ENCODE measurements at regions of chr4 and their contacts with region 1.

Region 1: GRCh38 chr4:142095886-142096605 is 459.7 kb downstream of the IL15 start:
- DNase-seq: peak; percentile 94
- H3K4me3 ChIP-seq: no peak overlapping the region
- H3K27ac ChIP-seq: peak overlapping the region; percentile 68
- H3K4me1 ChIP-seq: peaks cover 28% of the 10 kb centered on the region
- H3K27me3 ChIP-seq: no peaks in the 10 kb centered on the region
- CTCF ChIP-seq: no peak
- POLR2A ChIP-seq: no peak

Region 2: GRCh38 chr4:141220655-141221605 is 875.1 kb before region 1 on chr4 and contains the start of gene ZNF330:
- CTCF ChIA-PET with region 1: no interaction called
- POLR2A ChIA-PET with region 1: no interaction called
- dilution Hi-C with region 1: no loop called
- intact Hi-C with region 1: loop called (anchors 5 kb)
- DNase-seq: peak; percentile 93
- H3K4me3 ChIP-seq: peak within 1 kb of the TSS; percentile 92 to 99 (median 97)
- H3K27ac ChIP-seq: peak within 1 kb of the TSS; percentile 71
- H3K4me1 ChIP-seq: peaks cover 10% of the 10 kb centered on the region
- H3K27me3 ChIP-seq: peaks cover 0 to under 1% of the 10 kb centered on the region in 2 experiments
- CTCF ChIP-seq: peak; percentile 4 to 16
- POLR2A ChIP-seq: peak; percentile 69
- total RNA-seq, gene ZNF330: 31.0 and 34.2 TPM in 2 replicates

Region 3: GRCh38 chr4:141425124-141425523 is 670.9 kb before region 1 on chr4:
- CTCF ChIA-PET with region 1: no interaction called
- POLR2A ChIA-PET with region 1: no interaction called
- dilution Hi-C with region 1: no loop called
- intact Hi-C with region 1: no loop called
- DNase-seq: no peak
- H3K4me3 ChIP-seq: no peak overlapping the region
- H3K27ac ChIP-seq: no peak overlapping the region
- H3K4me1 ChIP-seq: no peaks in the 10 kb centered on the region
- H3K27me3 ChIP-seq: no peaks in the 10 kb centered on the region
- CTCF ChIP-seq: no peak
- POLR2A ChIP-seq: no peak

Region 4: GRCh38 chr4:141686146-141686775 is 409.8 kb before region 1 on chr4:
- CTCF ChIA-PET with region 1: no interaction called
- POLR2A ChIA-PET with region 1: no interaction called
- dilution Hi-C with region 1: no loop called
- intact Hi-C with region 1: loop called (anchors 1 kb)
- DNase-seq: peak; percentile 70
- H3K4me3 ChIP-seq: no peak overlapping the region
- H3K27ac ChIP-seq: peak overlapping the region; percentile 57
- H3K4me1 ChIP-seq: peaks cover 23% of the 10 kb centered on the region
- H3K27me3 ChIP-seq: no peaks in the 10 kb centered on the region
- CTCF ChIP-seq: no peak
- POLR2A ChIP-seq: no peak

Region 5: GRCh38 chr4:141826260-141826659 is 269.8 kb before region 1 on chr4:
- CTCF ChIA-PET with region 1: no interaction called
- POLR2A ChIA-PET with region 1: no interaction called
- dilution Hi-C with region 1: no loop called
- intact Hi-C with region 1: loop called (anchors 1 kb)
- DNase-seq: peak; percentile 45
- H3K4me3 ChIP-seq: no peak overlapping the region
- H3K27ac ChIP-seq: peak overlapping the region; percentile 68
- H3K4me1 ChIP-seq: peaks cover 19% of the 10 kb centered on the region
- H3K27me3 ChIP-seq: no peaks in the 10 kb centered on the region
- CTCF ChIP-seq: no peak
- POLR2A ChIP-seq: no peak

Region 6: DNA sequence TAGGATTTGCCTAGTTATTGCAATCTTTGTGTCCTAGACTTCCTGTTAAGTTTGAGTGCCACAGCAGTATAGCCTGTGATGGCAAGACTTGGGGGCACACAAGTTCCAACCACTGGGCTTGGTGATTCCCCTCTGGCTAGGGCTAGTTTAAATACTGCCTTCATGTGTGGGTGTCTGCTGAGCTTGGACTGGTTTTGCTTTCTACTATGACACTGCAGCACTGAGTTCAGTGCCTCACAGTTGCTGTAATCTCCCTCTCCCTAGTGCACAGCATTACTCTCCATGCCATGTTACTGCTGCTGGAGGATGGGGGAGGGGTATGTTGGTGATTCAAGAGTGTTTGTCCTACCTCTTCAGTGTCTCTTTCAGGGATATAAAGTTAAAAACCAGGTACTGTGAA is 80.0 kb before region 1 on chr4:
- CTCF ChIA-PET with region 1: no interaction called
- POLR2A ChIA-PET with region 1: no interaction called
- dilution Hi-C with region 1: no loop called
- intact Hi-C with region 1: no loop called
- DNase-seq: no peak
- H3K4me3 ChIP-seq: no peak overlapping the region
- H3K27ac ChIP-seq: no peak overlapping the region
- H3K4me1 ChIP-seq: peaks cover 7% of the 10 kb centered on the region
- H3K27me3 ChIP-seq: no peaks in the 10 kb centered on the region
- CTCF ChIP-seq: no peak
- POLR2A ChIP-seq: no peak

Region 7: DNA sequence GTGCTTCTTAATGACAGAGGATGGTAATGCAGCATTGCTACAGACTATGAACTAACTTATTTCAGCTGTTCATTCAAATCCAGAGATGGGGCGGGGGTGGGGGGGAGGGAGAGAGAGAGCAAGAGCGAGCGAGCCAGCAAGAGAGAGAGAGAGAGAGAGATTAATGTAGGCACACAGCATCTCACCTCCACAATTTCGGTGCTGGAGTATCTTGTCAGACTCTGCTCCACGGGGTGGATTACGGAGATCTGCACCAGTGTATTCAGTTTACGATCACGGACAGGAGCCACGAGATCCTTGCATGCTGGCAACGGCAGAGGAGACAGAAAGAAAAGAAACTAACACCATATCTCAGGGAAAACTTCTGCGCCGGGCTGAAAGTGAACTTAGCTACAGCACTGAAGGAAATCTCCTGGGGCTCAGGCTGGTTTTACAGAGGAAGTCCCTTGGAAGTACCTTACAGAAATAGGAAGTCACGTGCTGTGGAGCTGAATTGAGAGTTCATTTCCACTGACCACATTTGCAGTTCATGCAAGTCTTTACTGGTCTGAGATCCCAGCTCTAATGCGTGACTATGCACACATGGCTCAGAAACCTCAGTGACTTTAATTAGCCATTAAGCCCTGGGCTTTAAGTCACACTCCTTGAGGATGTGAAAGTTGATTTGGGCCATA is 309.1 kb after region 1 on chr4:
- CTCF ChIA-PET with region 1: no interaction called
- POLR2A ChIA-PET with region 1: no interaction called
- dilution Hi-C with region 1: no loop called
- intact Hi-C with region 1: loop called (anchors 2 kb)
- DNase-seq: peak; percentile 75
- H3K4me3 ChIP-seq: peak overlapping the region; percentile 29 to 83 (median 57)
- H3K27ac ChIP-seq: peak overlapping the region; percentile 77
- H3K4me1 ChIP-seq: peaks cover 44% of the 10 kb centered on the region
- H3K27me3 ChIP-seq: no peaks in the 10 kb centered on the region
- CTCF ChIP-seq: no peak
- POLR2A ChIP-seq: no peak